GM12878 (cell line): ENCODE measurements at regions of chr12 and their contacts with region 1.

Region 1: DNA sequence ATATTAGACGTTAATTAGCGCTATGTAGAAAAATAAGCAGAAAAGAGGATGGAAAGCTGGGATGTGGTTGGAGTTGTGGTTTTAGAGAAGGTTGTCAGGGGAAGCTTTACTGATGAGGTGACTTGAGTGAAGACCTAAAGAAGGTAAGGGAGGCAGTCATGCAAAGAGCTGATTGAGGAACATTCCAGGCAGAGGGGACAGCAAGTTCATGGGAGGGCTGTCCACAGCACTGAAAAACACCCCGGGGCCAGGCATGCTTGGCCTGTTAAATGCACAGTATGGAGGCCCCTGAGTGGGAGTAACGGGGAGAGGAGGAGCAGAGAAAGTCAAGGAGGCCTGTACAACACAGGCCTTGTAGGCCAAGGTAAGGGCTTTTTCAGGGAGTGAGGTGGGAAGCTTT is 15.6 kb downstream of the SMAGP start:
- DNase-seq: no peak
- ATAC-seq: no peak
- H3K4me3 ChIP-seq: no peak overlapping the region
- H3K27ac ChIP-seq: no peak overlapping the region
- H3K4me1 ChIP-seq: no peaks in the 10 kb centered on the region
- H3K27me3 ChIP-seq: no peaks in the 10 kb centered on the region
- CTCF ChIP-seq: no peak
- EP300 ChIP-seq: no peak
- POLR2A ChIP-seq: no peak
- RAD21 ChIP-seq: no peak

Region 2: DNA sequence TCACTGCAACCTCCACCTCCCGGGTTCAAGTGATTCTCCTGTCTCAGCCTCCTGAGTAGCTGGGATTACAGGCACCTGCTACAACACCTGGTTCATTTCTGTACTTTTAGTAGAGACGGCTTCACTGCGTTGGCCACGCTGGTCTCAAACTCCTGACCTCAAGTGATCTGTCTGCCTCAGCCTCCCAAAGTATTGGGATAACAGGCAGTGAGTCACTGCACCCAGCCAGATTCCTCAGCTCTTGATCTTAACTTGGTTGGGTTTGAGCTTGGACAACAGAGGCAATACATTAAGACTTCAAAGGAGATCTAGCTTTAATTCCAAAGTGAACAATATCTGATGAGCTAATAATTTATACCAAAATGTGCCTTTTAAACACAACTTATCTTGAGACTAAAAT is 10.3 kb before region 1 on chr12:
- CTCF ChIA-PET with region 1: interaction called, 17 read pairs
- POLR2A ChIA-PET with region 1: interaction called, 4 read pairs
- RAD21 ChIA-PET with region 1: interaction called, 3 read pairs
- SMC1A ChIA-PET with region 1: interaction called, 9 read pairs
- in situ Hi-C with region 1: no loop called
- intact Hi-C with region 1: no loop called
- DNase-seq: no peak
- ATAC-seq: no peak
- H3K4me3 ChIP-seq: no peak overlapping the region
- H3K27ac ChIP-seq: no peak overlapping the region
- H3K4me1 ChIP-seq: peaks cover 13% of the 10 kb centered on the region
- H3K27me3 ChIP-seq: no peaks in the 10 kb centered on the region
- CTCF ChIP-seq: no peak
- EP300 ChIP-seq: no peak
- POLR2A ChIP-seq: 0 out of 2 replicates have a peak, but pooled peaks have one; percentile 20
- RAD21 ChIP-seq: no peak